HepG2 (cell line): ENCODE measurements at regions of chr4 and their contacts with region 1.

Region 1: GRCh38 chr4:45944000-45944399 is 179.9 kb downstream of the GABRG1 start:
- DNase-seq: peak; percentile 5
- ATAC-seq: no peak
- H3K4me3 ChIP-seq: no peak overlapping the region
- H3K27ac ChIP-seq: no peak overlapping the region
- H3K4me1 ChIP-seq: no peaks in the 10 kb centered on the region
- H3K27me3 ChIP-seq: no peaks in the 10 kb centered on the region
- CTCF ChIP-seq: peak; percentile 31
- EP300 ChIP-seq: no peak
- POLR2A ChIP-seq: no peak
- RAD21 ChIP-seq: no peak

Region 2: DNA sequence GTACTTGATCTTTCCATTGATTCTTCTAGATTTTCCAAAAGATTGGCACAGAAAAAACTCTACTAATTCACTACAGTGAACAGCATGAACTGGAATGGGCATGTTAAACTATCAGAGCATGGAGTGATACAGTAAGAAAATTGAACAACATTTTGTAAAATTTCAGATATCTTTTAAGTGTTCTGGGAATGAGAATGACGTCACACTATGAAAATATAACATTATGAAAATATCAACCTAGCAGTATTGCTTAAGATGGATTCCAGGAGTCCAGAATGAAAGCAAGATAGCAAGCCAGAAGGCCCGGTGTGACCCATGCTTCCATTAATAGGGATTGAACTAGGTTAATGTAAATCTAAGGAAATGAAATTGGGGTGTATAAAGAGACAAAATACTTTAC is 140.0 kb before region 1 on chr4:
- CTCF ChIA-PET with region 1: no interaction called
- POLR2A ChIA-PET with region 1: no interaction called
- in situ Hi-C with region 1: no loop called
- intact Hi-C with region 1: no loop called
- DNase-seq: no peak
- ATAC-seq: no peak
- H3K4me3 ChIP-seq: no peak overlapping the region
- H3K27ac ChIP-seq: no peak overlapping the region
- H3K4me1 ChIP-seq: no peaks in the 10 kb centered on the region
- H3K27me3 ChIP-seq: no peaks in the 10 kb centered on the region
- CTCF ChIP-seq: no peak
- EP300 ChIP-seq: no peak
- POLR2A ChIP-seq: no peak
- RAD21 ChIP-seq: no peak

Region 3: GRCh38 chr4:45971108-45971507 is 27.1 kb after region 1 on chr4:
- CTCF ChIA-PET with region 1: no interaction called
- POLR2A ChIA-PET with region 1: no interaction called
- in situ Hi-C with region 1: no loop called
- intact Hi-C with region 1: no loop called
- DNase-seq: no peak
- ATAC-seq: no peak
- H3K4me3 ChIP-seq: no peak overlapping the region
- H3K27ac ChIP-seq: no peak overlapping the region
- H3K4me1 ChIP-seq: no peaks in the 10 kb centered on the region
- H3K27me3 ChIP-seq: no peaks in the 10 kb centered on the region
- CTCF ChIP-seq: no peak
- EP300 ChIP-seq: no peak
- POLR2A ChIP-seq: no peak
- RAD21 ChIP-seq: no peak

Region 4: GRCh38 chr4:46270986-46271596 is 327.1 kb after region 1 on chr4:
- CTCF ChIA-PET with region 1: interaction called, 3 read pairs
- POLR2A ChIA-PET with region 1: no interaction called
- in situ Hi-C with region 1: no loop called
- intact Hi-C with region 1: loop called (anchors 1 kb)
- DNase-seq: peak; percentile 17
- ATAC-seq: peak; percentile 79
- H3K4me3 ChIP-seq: no peak overlapping the region
- H3K27ac ChIP-seq: no peak overlapping the region
- H3K4me1 ChIP-seq: no peaks in the 10 kb centered on the region
- H3K27me3 ChIP-seq: no peaks in the 10 kb centered on the region
- CTCF ChIP-seq: peak; percentile 60
- EP300 ChIP-seq: no peak
- POLR2A ChIP-seq: no peak
- RAD21 ChIP-seq: no peak